CD4-positive, alpha-beta memory T cell (primary cell): ENCODE measurements at regions of chrX and their contacts with region 1.

Region 1: GRCh38 chrX:101617211-101618191 is at the start of gene ARMCX6:
- DNase-seq: peak; percentile 66 to 82 (median 68)
- H3K4me3 ChIP-seq: peak within 1 kb of the TSS; percentile 47 to 82
- H3K4me3 Mint-ChIP-seq: peak within 1 kb of the TSS; percentile 90 to 97 (median 95)
- H3K27ac ChIP-seq: peak within 1 kb of the TSS; percentile 65
- H3K27ac Mint-ChIP-seq: peak within 1 kb of the TSS; percentile 86 to 97 (median 94)
- H3K4me1 ChIP-seq: peaks cover 14% of the 10 kb centered on the region
- H3K4me1 Mint-ChIP-seq: peaks cover 3 to 22% (median 7%) of the 10 kb centered on the region in 4 donors
- H3K27me3 ChIP-seq: no peaks in the 10 kb centered on the region
- H3K27me3 Mint-ChIP-seq: no peaks in the 10 kb centered on the region
- total RNA-seq, gene ARMCX6: 36.6 to 40.5 TPM

Region 2: GRCh38 chrX:100677611-100678181 is 939.8 kb before region 1 on chrX:
- CTCF ChIA-PET with region 1: no interaction called
- POLR2A ChIA-PET with region 1: no interaction called
- intact Hi-C with region 1: no loop called
- DNase-seq: no peak
- H3K4me3 ChIP-seq: no peak overlapping the region
- H3K4me3 Mint-ChIP-seq: no peak overlapping the region
- H3K27ac ChIP-seq: no peak overlapping the region
- H3K27ac Mint-ChIP-seq: no peak overlapping the region
- H3K4me1 ChIP-seq: peaks cover 19% of the 10 kb centered on the region
- H3K4me1 Mint-ChIP-seq: peaks cover 13 to 18% (median 16%) of the 10 kb centered on the region in 4 donors
- H3K27me3 ChIP-seq: no peaks in the 10 kb centered on the region
- H3K27me3 Mint-ChIP-seq: no peaks in the 10 kb centered on the region

Region 3: DNA sequence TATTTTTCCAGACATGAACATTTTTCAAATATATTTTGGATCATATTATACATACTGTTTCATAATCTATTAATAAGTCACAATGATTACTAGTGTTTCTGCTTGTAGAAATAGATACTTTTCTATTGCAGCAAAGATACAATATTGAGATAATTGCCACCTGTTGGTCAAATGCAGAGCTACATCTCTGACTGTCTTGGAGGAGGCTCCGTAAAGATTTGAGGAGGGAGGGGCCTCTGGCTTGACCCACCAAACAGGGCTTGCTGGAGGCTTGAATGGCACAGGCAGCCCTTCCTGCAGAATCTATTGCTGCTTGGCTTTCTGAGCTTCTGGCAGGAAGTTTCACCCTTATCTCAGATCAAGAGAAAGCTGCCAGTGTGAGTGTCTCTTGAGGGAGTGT is 141.5 kb after region 1 on chrX:
- CTCF ChIA-PET with region 1: no interaction called
- POLR2A ChIA-PET with region 1: no interaction called
- intact Hi-C with region 1: loop called (anchors 5 kb)
- DNase-seq: peak; percentile 22 to 44 (median 33)
- H3K4me3 ChIP-seq: no peak overlapping the region
- H3K4me3 Mint-ChIP-seq: no peak overlapping the region
- H3K27ac ChIP-seq: no peak overlapping the region
- H3K27ac Mint-ChIP-seq: no peak overlapping the region
- H3K4me1 ChIP-seq: no peaks in the 10 kb centered on the region
- H3K4me1 Mint-ChIP-seq: peaks cover 0 to 2% (median 0%) of the 10 kb centered on the region in 4 donors
- H3K27me3 ChIP-seq: no peaks in the 10 kb centered on the region
- H3K27me3 Mint-ChIP-seq: peaks cover 2% of the 10 kb centered on the region in 2 donors